ENCODE measurements at regions of chr4 and their contacts with region 1.

Region 1: GRCh38 chr4:159175085-159175988 is 72.5 kb downstream of the RAPGEF2 start:
- DNase-seq: peak in 1 of 2 donors; percentile 63
- ATAC-seq: peak; percentile 90
- H3K4me3 ChIP-seq: peak overlapping the region in 1 of 2 donors; percentile 10
- H3K27ac ChIP-seq: peak overlapping the region in 1 of 2 donors; percentile 62
- H3K4me1 ChIP-seq: peaks cover 3 to 7% of the 10 kb centered on the region in 2 donors
- H3K27me3 ChIP-seq: no peaks in the 10 kb centered on the region

Region 2: GRCh38 chr4:158722917-158723793 is 452.2 kb before region 1 on chr4 and contains the start of gene PPID:
- intact Hi-C with region 1: loop called in 1 of 2 experiments (anchors 10 kb)
- DNase-seq: peak; percentile 88 to 95
- ATAC-seq: peak; percentile 97
- H3K4me3 ChIP-seq: peak within 1 kb of the TSS; percentile 63 to 89
- H3K27ac ChIP-seq: peak within 1 kb of the TSS in 1 of 2 donors; percentile 83
- H3K4me1 ChIP-seq: peaks cover 0 to 3% of the 10 kb centered on the region in 2 donors
- H3K27me3 ChIP-seq: no peaks in the 10 kb centered on the region
- total RNA-seq, gene PPID: 14.2 to 19.7 TPM

Region 3: GRCh38 chr4:158729716-158730559 is 445.4 kb before region 1 on chr4:
- intact Hi-C with region 1: loop called (anchors 10 kb)
- DNase-seq: peak; percentile 73 to 77
- ATAC-seq: peak; percentile 87
- H3K4me3 ChIP-seq: no peak overlapping the region
- H3K27ac ChIP-seq: no peak overlapping the region
- H3K4me1 ChIP-seq: no peaks in the 10 kb centered on the region
- H3K27me3 ChIP-seq: no peaks in the 10 kb centered on the region

Region 4: GRCh38 chr4:158856852-158857251 is 318.5 kb before region 1 on chr4:
- intact Hi-C with region 1: loop called (anchors 5 kb)
- DNase-seq: no peak
- ATAC-seq: peak; percentile 73
- H3K4me3 ChIP-seq: no peak overlapping the region
- H3K27ac ChIP-seq: no peak overlapping the region
- H3K4me1 ChIP-seq: no peaks in the 10 kb centered on the region
- H3K27me3 ChIP-seq: no peaks in the 10 kb centered on the region

Region 5: DNA sequence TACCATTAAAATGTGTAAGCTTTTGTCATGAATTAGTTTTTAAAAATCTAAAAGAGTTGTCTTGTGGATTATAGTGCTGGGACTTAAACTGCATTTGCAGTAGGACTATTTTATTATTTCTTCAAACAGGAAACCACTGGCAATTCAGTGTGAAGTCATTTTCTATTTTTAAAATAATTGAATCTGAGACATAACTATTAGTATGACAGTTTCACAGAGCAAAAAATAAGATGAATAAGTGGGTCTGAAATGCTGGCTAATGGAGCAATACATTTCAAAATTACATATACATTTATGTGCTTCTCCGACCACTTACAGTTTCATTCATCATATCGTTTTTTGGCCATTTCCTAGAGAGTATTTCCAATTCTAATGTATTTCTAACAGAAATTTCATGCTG is 147.8 kb before region 1 on chr4:
- intact Hi-C with region 1: loop called in 1 of 2 experiments (anchors 10 kb)
- DNase-seq: no peak
- ATAC-seq: no peak
- H3K4me3 ChIP-seq: no peak overlapping the region
- H3K27ac ChIP-seq: no peak overlapping the region
- H3K4me1 ChIP-seq: no peaks in the 10 kb centered on the region
- H3K27me3 ChIP-seq: no peaks in the 10 kb centered on the region

Region 6: DNA sequence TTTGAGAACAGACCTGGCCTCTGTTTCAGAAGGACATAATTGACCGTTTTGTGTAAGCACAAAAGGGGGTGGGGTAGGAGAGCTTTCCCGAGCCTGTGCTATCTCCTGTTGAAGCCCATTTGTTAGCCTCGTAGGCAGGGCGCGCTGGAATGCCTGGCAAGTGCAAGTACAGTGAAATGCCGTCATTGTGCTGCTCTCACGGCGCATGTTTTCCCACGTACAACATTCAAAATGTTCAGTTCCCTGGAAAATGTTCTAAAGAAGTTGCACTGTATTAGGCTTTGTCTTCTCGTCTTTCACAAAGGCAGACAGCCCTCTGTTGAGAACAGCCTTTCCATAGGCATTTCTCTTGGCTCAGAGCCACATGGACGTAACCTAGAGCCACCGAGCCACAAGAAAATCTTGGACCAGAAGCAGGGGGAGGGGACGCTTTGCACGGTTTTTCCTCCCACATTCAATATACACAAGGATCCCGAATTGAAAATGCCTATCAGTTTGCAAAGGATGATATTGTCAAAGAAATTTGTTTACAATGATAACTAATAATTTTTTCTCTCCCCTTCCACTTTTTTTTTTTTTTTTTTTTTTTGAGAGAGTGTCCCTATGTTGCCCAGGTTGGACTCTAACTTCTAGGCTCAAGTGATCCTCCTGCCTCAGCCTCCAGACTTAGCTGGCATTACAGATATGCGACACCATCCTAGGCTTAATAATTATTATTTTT is 127.0 kb before region 1 on chr4:
- intact Hi-C with region 1: loop called in 1 of 2 experiments (anchors 10 kb)
- DNase-seq: peak; percentile 74 to 84
- ATAC-seq: peak; percentile 75
- H3K4me3 ChIP-seq: peak overlapping the region in 1 of 2 donors; percentile 26
- H3K27ac ChIP-seq: peak overlapping the region in 1 of 2 donors; percentile 62
- H3K4me1 ChIP-seq: peaks cover 0 to 6% of the 10 kb centered on the region in 2 donors
- H3K27me3 ChIP-seq: no peaks in the 10 kb centered on the region

Region 7: GRCh38 chr4:159102622-159103383 is 72.5 kb before region 1 on chr4 and contains the start of gene RAPGEF2:
- intact Hi-C with region 1: loop called (anchors 5 to 10 kb)
- DNase-seq: peak; percentile 96
- ATAC-seq: peak; percentile 95
- H3K4me3 ChIP-seq: peak within 1 kb of the TSS; percentile 99 to 100
- H3K27ac ChIP-seq: peak within 1 kb of the TSS; percentile 85 to 99
- H3K4me1 ChIP-seq: peaks cover 0 to 4% of the 10 kb centered on the region in 2 donors
- H3K27me3 ChIP-seq: no peaks in the 10 kb centered on the region
- total RNA-seq, gene RAPGEF2: 47.6 to 51.3 TPM

Measured in aorta (tissue), 5 donors.